Heart left ventricle (tissue), 16 donors: ENCODE measurements at regions of chr4 and their contacts with region 1.

Region 1: GRCh38 chr4:8547108-8547970 is 32.9 kb upstream of the GPR78 start:
- DNase-seq: peak in 1 of 5 donors; percentile 16
- ATAC-seq: no peak
- H3K4me3 ChIP-seq: no peak overlapping the region
- H3K27ac ChIP-seq: no peak overlapping the region
- H3K4me1 ChIP-seq: no peaks in the 10 kb centered on the region
- H3K27me3 ChIP-seq: peaks cover 0 to 5% (median 0%) of the 10 kb centered on the region in 9 donors
- CTCF ChIP-seq: peak in 7 of 12 donors; percentile 6 to 33 (median 21)
- POLR2A ChIP-seq: no peak

Region 2: GRCh38 chr4:8468746-8469535 is 78.4 kb before region 1 on chr4:
- intact Hi-C with region 1: loop called in 1 of 10 experiments (anchors 5 kb)
- DNase-seq: peak; percentile 38 to 85 (median 60)
- ATAC-seq: peak in 3 of 4 donors; percentile 57 to 69 (median 66)
- H3K4me3 ChIP-seq: no peak overlapping the region
- H3K27ac ChIP-seq: no peak overlapping the region
- H3K4me1 ChIP-seq: peaks cover 0 to 21% (median 2%) of the 10 kb centered on the region in 12 donors
- H3K27me3 ChIP-seq: no peaks in the 10 kb centered on the region
- CTCF ChIP-seq: peak; percentile 81 to 94 (median 90)
- POLR2A ChIP-seq: no peak